ENCODE measurements at regions of chr2 and their contacts with region 1.

Region 1: GRCh38 chr2:177489719-177490301 is 97.2 kb downstream of the AGPS start:
- DNase-seq: no peak
- ATAC-seq: no peak

Region 2: GRCh38 chr2:177585234-177585863 is 95.5 kb after region 1 on chr2:
- intact Hi-C with region 1: no loop called
- DNase-seq: no peak
- ATAC-seq: peak; percentile 86

Region 3: GRCh38 chr2:177604271-177605065 is 114.7 kb after region 1 on chr2:
- intact Hi-C with region 1: loop called in 1 of 2 experiments (anchors 10 kb)
- DNase-seq: no peak
- ATAC-seq: peak; percentile 42

Region 4: GRCh38 chr2:177724398-177725287 is 234.8 kb after region 1 on chr2:
- intact Hi-C with region 1: loop called in 1 of 2 experiments (anchors 5 kb)
- DNase-seq: peak in 1 of 2 donors; percentile 51
- ATAC-seq: peak; percentile 81

Region 5: GRCh38 chr2:177906041-177906718 is 416.4 kb after region 1 on chr2:
- intact Hi-C with region 1: no loop called
- DNase-seq: peak; percentile 42 to 58
- ATAC-seq: peak; percentile 91

Measured in left colon (tissue), 2 donors.